ENCODE measurements at regions of chr7 and their contacts with region 1.

Region 1: DNA sequence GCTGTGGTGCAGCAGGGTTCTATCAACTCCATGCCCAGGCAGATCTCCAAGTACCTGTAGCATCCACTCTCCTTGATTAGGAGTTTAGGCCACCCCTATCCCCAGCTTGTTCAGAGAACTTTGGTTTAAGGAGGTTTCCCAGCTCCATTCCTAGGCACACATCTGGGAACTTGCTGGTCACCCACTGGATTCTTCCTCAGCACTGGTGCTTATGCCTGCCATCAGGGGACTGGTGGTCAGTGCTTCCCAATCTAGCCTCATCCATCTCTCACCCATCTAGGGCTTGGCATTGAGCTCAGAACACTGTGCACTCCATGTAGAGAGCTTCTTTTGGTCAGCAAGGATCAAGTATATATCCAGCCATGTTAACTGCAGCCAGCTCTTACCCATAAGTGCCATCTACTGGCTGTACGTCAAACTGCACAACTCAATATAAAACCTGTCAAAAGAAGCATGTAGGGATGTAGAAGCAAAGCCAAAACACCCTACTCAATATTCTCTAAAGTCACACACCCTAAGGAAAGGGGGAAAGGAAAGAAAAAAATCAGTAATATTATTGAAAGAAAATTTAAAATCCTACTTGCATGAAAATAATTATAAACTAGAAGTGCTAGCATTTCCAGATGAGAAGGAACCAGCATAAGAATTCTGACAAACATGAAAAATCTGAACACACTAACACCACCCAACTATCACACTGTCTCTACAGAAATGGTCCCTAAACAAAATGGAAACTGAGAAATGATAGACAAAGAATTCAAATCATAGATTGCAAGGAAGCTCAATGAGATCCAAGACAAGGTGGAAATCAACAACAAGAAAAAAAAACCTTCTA is 531.2 kb upstream of the STEAP1 start:
- DNase-seq: peak; percentile 18
- H3K4me3 Mint-ChIP-seq: no peak overlapping the region
- H3K27ac Mint-ChIP-seq: no peak overlapping the region
- H3K4me1 Mint-ChIP-seq: peaks cover 25% of the 10 kb centered on the region
- H3K27me3 Mint-ChIP-seq: no peaks in the 10 kb centered on the region
- CTCF ChIP-seq: peak; percentile 36

Region 2: DNA sequence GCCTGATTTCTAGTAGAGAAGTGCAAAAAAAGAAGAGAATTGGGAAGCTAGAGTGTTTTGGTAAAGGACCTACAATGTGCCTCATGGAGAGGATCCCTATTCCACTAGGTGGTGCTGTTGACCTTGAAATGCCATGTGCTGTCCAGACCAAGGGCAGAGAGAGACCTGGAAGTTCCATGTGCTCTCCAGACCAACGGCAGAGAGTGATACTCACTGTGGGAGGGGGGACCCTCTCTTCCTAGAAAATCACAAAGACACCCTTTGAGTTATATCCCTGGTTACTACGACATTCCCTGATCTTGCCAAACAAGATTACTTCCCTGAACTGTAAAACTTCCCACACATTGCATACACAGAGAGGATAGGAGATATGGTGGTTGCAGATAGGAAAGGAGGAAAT is 1076.2 kb before region 1 on chr7:
- CTCF ChIA-PET with region 1: interaction called, 3 read pairs
- intact Hi-C with region 1: loop called (anchors 5 kb)
- DNase-seq: peak; percentile 58
- H3K4me3 Mint-ChIP-seq: no peak overlapping the region
- H3K27ac Mint-ChIP-seq: no peak overlapping the region
- H3K4me1 Mint-ChIP-seq: no peaks in the 10 kb centered on the region
- H3K27me3 Mint-ChIP-seq: no peaks in the 10 kb centered on the region
- CTCF ChIP-seq: peak; percentile 38

Region 3: GRCh38 chr7:88789480-88790064 is 833.5 kb before region 1 on chr7:
- CTCF ChIA-PET with region 1: no interaction called
- intact Hi-C with region 1: loop called (anchors 1 kb)
- DNase-seq: peak; percentile 2
- H3K4me3 Mint-ChIP-seq: no peak overlapping the region
- H3K27ac Mint-ChIP-seq: no peak overlapping the region
- H3K4me1 Mint-ChIP-seq: no peaks in the 10 kb centered on the region
- H3K27me3 Mint-ChIP-seq: no peaks in the 10 kb centered on the region
- CTCF ChIP-seq: no peak

Region 4: GRCh38 chr7:89334797-89335196 is 288.3 kb before region 1 on chr7:
- CTCF ChIA-PET with region 1: no interaction called
- intact Hi-C with region 1: loop called (anchors 1 kb)
- DNase-seq: no peak
- H3K4me3 Mint-ChIP-seq: no peak overlapping the region
- H3K27ac Mint-ChIP-seq: no peak overlapping the region
- H3K4me1 Mint-ChIP-seq: no peaks in the 10 kb centered on the region
- H3K27me3 Mint-ChIP-seq: no peaks in the 10 kb centered on the region
- CTCF ChIP-seq: no peak